Panc1 (cell line): ENCODE measurements at regions of chr12 and their contacts with region 1.

Region 1: GRCh38 chr12:8572507-8572906 is 31.8 kb upstream of the CLEC4E start:
- DNase-seq: no peak
- ATAC-seq: no peak
- H3K4me3 ChIP-seq: no peak overlapping the region
- H3K27ac ChIP-seq: no peak overlapping the region
- H3K4me1 ChIP-seq: no peaks in the 10 kb centered on the region
- H3K27me3 ChIP-seq: peaks cover 2% of the 10 kb centered on the region; the same call in 1 of the 2 replicates
- CTCF ChIP-seq: no peak

Region 2: DNA sequence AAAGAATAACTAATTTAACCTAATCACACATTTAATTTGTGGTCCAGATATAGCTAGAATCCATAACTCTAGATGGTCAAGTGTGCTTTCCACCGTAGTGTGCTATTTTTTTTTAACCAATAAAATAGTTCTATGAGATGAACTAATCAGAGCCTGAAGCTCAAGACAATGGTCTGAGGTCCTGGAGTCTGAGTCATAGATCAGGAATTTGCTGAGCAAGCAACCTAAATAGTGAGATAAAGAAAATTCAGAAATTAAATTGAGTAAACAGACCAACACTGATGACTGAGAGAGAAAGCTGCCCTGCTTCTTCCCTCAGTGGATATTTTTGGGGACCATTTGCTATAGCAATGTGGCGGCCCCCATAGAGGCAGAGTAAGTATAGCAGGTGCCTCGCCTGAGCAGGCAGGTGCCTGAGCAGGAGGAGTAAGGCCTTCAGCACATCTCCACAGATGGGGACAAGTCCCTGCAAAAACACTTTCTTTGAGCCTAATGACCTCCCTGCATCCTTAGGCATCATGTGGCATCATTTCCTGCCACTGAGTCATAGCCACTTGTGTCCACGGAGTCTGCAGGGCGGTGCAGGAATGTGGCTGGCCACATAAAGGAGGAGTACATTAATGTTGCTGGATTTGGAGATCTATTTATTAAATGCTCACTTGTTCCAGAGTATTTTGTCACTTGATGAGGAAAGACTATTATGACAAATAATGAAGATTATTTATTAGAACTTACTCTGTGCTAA is 17.9 kb before region 1 on chr12:
- CTCF ChIA-PET with region 1: no interaction called
- POLR2A ChIA-PET with region 1: no interaction called
- in situ Hi-C with region 1: no loop called
- intact Hi-C with region 1: no loop called
- DNase-seq: no peak
- ATAC-seq: no peak
- H3K4me3 ChIP-seq: no peak overlapping the region
- H3K27ac ChIP-seq: no peak overlapping the region
- H3K4me1 ChIP-seq: no peaks in the 10 kb centered on the region
- H3K27me3 ChIP-seq: no peaks in the 10 kb centered on the region
- CTCF ChIP-seq: no peak

Region 3: GRCh38 chr12:8590842-8591550 is 18.5 kb after region 1 on chr12:
- CTCF ChIA-PET with region 1: interaction called, 12 read pairs
- POLR2A ChIA-PET with region 1: no interaction called
- in situ Hi-C with region 1: no loop called
- intact Hi-C with region 1: no loop called
- DNase-seq: no peak
- ATAC-seq: no peak
- H3K4me3 ChIP-seq: no peak overlapping the region
- H3K27ac ChIP-seq: no peak overlapping the region
- H3K4me1 ChIP-seq: no peaks in the 10 kb centered on the region
- H3K27me3 ChIP-seq: no peaks in the 10 kb centered on the region
- CTCF ChIP-seq: no peak